ENCODE measurements at regions of chr2 and their contacts with region 1.

Region 1: GRCh38 chr2:98518090-98518489 is 73.4 kb downstream of the INPP4A start:
- DNase-seq: peak; percentile 72
- H3K4me3 Mint-ChIP-seq: no peak overlapping the region
- H3K27ac Mint-ChIP-seq: peak overlapping the region; percentile 28
- H3K4me1 Mint-ChIP-seq: peaks cover 57% of the 10 kb centered on the region
- H3K27me3 Mint-ChIP-seq: no peaks in the 10 kb centered on the region

Region 2: GRCh38 chr2:98412751-98413458 is 105.2 kb before region 1 on chr2:
- CTCF ChIA-PET with region 1: interaction called, 19 read pairs
- DNase-seq: peak; percentile 64
- H3K4me3 Mint-ChIP-seq: no peak overlapping the region
- H3K27ac Mint-ChIP-seq: no peak overlapping the region
- H3K4me1 Mint-ChIP-seq: peaks cover 11% of the 10 kb centered on the region
- H3K27me3 Mint-ChIP-seq: peaks cover 15% of the 10 kb centered on the region

Region 3: GRCh38 chr2:98487806-98488651 is 30.1 kb before region 1 on chr2:
- CTCF ChIA-PET with region 1: interaction called, 14 read pairs
- DNase-seq: peak; percentile 67
- H3K4me3 Mint-ChIP-seq: no peak overlapping the region
- H3K27ac Mint-ChIP-seq: peak overlapping the region; percentile 70
- H3K4me1 Mint-ChIP-seq: peaks cover 89% of the 10 kb centered on the region
- H3K27me3 Mint-ChIP-seq: no peaks in the 10 kb centered on the region